Right ventricle myocardium inferior (tissue), 1 donor: ENCODE measurements at regions of chr6 and their contacts with region 1.

Region 1: DNA sequence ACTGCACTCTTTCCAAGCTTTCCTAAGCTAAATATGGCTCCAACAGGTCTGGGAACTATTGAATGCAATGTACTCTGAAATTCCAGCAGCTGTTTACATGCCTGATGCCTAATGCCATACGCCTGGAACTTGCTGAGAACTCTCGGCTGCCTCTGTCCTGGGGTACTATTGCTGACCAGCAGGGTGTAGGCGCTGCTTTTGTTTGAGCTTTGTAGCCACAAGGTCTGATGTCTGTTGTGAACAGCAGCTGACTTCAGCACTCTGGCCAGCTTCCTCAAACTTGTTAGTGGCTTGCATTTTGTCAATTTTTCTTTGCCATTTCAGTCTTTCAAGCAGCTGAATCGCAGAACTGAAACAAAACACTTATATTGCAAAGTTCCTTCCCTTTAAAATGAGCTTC is 26.7 kb downstream of the SAYSD1 start:
- DNase-seq: no peak
- ATAC-seq: peak; percentile 78

Region 2: DNA sequence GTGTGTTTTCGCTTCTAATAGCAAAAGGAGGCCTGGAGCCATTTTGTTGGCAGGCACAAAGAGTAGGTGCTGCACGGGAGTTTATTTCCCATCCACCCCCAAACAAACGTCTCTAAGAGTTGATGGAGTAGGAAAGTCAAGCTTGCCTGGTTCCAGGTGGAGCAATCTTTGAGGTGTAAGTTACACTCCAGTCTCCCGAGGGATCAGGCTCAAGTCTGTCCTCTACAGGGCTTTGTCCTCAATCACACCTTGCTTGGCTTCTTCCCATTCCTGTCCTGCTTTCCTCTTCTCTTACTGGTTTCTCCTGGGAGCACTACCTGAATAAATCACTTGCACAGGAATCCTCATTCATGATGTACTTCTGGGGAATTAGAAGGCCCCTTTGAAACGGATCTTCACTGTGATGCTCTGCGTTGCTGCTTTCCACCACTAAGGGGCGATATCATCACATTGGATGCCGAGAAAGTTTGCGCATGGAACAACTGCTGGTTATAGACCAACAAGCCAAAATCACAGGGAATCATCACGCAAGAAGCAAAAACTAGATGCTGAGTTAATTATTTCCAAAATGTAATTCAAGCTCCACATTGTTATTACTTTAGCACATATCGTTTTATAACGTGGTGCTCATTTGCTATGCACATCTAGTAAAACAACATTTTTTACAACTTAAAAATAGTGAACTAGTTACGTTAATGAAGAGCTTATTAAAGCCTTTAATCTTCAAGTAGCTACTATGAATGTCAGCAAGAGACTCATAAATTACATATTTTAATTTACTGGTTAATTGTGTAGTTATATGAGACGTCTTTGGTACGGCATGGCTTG is 216.4 kb before region 1 on chr6:
- intact Hi-C with region 1: loop called (anchors 5 kb)
- DNase-seq: no peak
- ATAC-seq: no peak

Region 3: DNA sequence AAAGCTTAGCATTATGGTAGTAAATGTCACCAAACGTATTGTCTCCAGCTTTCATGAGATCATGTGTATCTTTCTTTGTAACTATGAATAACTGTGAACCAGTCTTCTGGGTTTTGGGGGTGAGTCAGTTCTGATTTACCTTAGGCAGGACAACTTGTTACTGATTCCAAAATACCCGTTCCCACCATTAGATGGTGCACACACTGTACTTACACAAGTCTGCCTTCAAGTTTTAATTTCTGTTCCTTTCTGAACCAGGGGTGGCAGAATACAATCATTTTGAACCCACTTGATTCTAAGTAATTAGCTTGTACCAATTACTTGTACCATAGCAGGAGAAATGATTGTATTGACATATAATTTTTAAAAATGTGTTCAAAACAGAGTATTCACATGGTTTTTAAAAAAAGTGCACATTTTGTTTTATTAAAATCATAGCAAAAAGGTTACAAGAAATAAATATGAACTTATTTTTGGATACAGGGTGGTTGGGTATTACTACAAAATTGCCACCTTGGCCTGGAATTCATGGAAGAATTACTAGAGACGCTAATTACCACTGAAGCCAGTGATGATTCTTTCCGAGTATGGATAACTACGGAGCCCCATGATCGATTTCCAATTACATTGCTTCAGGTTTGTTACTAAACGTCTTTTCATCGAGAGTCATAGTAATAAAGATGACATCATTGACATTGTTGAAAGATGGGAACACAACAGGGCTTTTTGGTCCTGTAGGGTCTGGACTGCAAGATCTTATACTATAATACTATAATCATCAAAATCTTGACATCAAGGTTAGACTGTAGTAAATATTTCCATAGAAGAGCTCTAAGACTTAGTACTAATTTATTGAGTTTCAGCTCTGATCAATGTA is 114.9 kb before region 1 on chr6:
- intact Hi-C with region 1: loop called (anchors 2 kb)
- DNase-seq: no peak
- ATAC-seq: peak; percentile 71

Region 4: DNA sequence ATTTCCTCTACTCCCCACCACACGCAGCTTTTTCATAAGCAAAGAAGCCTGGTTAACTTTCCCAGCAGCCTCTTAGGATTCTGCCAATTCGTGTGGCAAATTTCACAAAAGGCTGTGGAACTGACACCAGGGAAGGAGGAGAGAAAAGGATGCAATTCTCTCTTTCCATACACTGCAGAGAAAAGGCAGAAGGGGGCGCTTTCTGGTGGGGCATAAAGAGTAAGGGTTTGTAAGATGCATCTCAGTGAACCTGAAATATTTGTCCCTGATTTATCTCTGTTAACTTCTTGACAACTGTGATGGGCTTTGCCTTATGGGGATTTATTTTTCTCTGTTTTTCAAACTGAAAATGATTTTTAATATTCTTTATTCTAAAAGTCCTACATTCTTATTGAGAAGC is 85.3 kb before region 1 on chr6:
- intact Hi-C with region 1: loop called (anchors 5 kb)
- DNase-seq: no peak
- ATAC-seq: no peak

Region 5: DNA sequence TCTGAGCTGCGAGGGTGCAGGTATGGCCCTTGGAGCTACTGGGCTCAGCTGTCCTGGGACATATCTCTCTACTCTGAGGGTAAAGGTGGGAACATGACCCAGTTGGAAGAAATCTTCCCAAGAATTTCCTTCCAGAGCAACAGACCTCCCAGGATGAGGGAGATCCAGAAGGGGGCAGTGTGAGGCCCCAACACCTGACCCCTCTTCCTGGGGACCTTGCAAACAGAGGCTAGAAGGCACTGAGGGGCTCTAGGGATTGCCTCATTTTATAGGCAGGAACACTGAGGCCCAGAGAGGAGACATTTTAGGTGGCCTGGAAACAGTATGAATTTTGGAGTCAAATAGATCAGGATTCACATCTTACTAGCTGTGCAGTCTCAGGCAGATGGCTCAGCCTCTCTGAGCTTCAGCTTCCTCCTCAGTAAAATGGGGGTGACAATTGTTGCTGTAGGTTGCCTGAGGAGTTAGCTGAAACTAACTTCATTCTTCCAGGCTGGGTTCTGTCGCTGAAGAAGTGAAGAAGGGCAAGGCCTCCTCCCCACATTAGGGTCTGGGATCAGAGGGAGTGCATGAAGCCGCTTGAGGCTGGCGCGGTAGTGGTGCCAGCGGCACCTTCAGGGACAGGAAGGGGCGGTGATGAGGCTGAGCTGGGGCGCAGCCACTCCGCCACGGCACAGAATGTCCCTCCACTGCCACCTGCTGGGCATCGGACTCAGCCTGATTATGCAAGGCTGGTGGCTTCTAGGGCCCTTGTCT is 214.5 kb after region 1 on chr6:
- intact Hi-C with region 1: loop called (anchors 5 kb)
- DNase-seq: peak; percentile 89
- ATAC-seq: peak; percentile 85